HepG2 (cell line): ENCODE measurements at regions of chr1 and their contacts with region 1.

Region 1: GRCh38 chr1:147236959-147237826 is 5.3 kb upstream of the CHD1L start:
- DNase-seq: no peak
- ATAC-seq: peak; percentile 17; the same call in 2 of the 3 replicates
- H3K4me3 ChIP-seq: no peak overlapping the region; a peak in 2 of 6 replicates
- H3K27ac ChIP-seq: peak overlapping the region; percentile 93
- H3K4me1 ChIP-seq: peaks cover 87% of the 10 kb centered on the region
- H3K27me3 ChIP-seq: no peaks in the 10 kb centered on the region
- CTCF ChIP-seq: peak; percentile 33; the same call in 1 of the 2 replicates
- EP300 ChIP-seq: no peak
- POLR2A ChIP-seq: no peak
- RAD21 ChIP-seq: no peak

Region 2: DNA sequence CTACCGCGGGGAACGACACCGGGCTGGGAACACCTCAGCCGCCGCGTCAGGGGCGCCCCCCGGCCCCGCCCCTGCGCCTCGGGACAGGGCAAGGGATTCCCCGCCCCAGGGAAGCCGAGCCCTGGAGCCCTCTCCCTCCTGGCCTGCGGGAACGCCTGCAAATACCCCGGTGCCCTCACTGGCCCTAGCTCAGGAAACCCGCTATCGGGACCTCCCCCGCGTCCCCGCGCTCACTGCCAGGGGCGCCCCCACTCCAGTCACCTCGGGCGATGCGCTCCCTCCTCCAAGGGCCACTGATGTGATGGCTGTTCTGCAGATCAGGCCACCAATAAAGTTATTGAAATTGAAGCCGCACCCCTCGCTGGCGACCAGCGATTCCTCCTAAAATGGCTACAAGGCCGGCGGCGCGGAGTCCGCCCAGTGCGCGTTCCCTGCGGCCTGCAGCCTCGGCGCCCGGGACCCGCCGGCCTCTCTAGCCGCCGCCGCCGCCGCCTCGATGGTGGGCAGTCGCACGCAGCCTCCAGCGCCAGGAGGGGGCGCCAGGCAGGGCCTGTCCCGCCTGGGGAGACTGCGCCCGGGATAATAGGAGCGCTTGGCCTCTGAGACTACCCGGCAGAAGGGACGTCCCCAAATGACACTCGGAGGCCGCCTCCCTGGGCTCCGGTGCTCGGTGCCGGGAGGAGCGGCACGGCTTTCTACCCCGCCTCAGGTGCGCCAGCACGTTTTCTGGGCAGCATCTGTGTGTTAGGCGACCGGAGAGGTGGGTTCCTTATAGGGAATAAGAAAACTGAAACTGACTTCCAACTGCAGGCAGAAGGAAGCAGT is 64.8 kb before region 1 on chr1 and contains the start of gene PRKAB2:
- CTCF ChIA-PET with region 1: interaction called, 141 read pairs
- POLR2A ChIA-PET with region 1: interaction called, 82 read pairs
- in situ Hi-C with region 1: loop called (anchors 5 kb)
- intact Hi-C with region 1: loop called (anchors 1 kb)
- DNase-seq: peak; percentile 91
- ATAC-seq: peak; percentile 93
- H3K4me3 ChIP-seq: peak within 1 kb of the TSS; percentile 85 to 99 (median 99)
- H3K27ac ChIP-seq: peak within 1 kb of the TSS; percentile 89
- H3K4me1 ChIP-seq: peaks cover 40% of the 10 kb centered on the region
- H3K27me3 ChIP-seq: peaks cover 0 to 4% of the 10 kb centered on the region in 2 experiments; a peak in 1 of 5 replicates
- CTCF ChIP-seq: peak; percentile 92
- EP300 ChIP-seq: peak in 1 of 2 experiments; percentile 35; a peak in 1 of 4 replicates
- POLR2A ChIP-seq: peak in 1 of 2 experiments; percentile 59; a peak in 3 of 4 replicates
- RAD21 ChIP-seq: peak; percentile 99
- total RNA-seq, gene PRKAB2: 43.3 and 44.0 TPM in 2 replicates

Region 3: DNA sequence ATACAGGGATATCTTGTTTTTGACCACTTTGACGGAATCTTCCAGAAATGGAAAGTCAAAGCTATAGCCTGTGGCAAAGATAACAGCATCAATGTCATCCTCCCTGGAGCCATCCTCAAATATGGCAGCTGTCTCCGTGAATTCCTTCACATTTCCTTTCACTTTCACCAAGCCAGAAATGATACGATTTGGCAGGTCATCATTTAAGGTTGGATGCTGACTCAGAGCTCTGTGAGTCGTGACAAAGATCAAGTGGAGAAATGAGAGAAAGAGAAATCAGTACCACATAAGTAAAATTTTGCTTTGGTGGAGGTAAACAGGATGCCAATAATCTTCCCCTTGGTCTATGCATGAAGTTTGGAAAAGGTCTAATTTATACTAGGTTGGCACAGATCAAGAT is 35.9 kb before region 1 on chr1:
- CTCF ChIA-PET with region 1: no interaction called
- POLR2A ChIA-PET with region 1: interaction called, 12 read pairs
- in situ Hi-C with region 1: no loop called
- intact Hi-C with region 1: loop called (anchors 5 kb)
- DNase-seq: no peak
- ATAC-seq: peak; percentile 13; the same call in 1 of the 3 replicates
- H3K4me3 ChIP-seq: no peak overlapping the region
- H3K27ac ChIP-seq: no peak overlapping the region
- H3K4me1 ChIP-seq: no peaks in the 10 kb centered on the region
- H3K27me3 ChIP-seq: no peaks in the 10 kb centered on the region
- CTCF ChIP-seq: no peak
- EP300 ChIP-seq: no peak
- POLR2A ChIP-seq: peak in 1 of 2 experiments; percentile 20; a peak in 1 of 4 replicates
- RAD21 ChIP-seq: no peak

Region 4: DNA sequence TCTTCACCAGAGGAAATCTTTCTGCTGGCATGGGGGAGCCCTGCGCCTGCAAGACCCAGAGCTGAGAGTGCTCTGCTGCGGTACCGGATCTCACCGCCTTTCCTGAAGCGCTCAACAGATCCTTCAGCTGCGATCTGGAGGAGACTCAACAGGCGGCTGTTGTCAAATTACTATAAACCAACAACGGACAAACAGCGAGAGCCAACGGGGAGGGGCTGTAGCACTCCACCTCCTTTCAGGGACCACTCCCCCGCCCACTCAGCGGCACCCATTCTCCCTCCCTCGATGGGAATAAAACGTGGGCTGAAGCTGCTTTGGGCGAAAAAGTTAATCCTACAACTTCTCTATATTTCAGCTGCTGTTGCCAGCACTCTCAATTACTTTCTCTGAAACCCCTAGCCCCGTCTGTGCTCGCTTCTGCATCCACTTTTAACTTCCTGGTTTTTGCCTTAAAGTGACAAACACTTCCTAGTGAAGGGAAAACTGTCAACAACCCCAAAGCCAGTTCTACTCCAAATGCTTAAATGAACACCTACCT is 11.9 kb before region 1 on chr1 and contains the start of gene FMO5:
- CTCF ChIA-PET with region 1: interaction called, 16 read pairs
- POLR2A ChIA-PET with region 1: interaction called, 100 read pairs
- in situ Hi-C with region 1: no loop called
- intact Hi-C with region 1: loop called (anchors 2 kb)
- DNase-seq: no peak
- ATAC-seq: peak; percentile 93
- H3K4me3 ChIP-seq: peak within 1 kb of the TSS; percentile 62 to 80 (median 69)
- H3K27ac ChIP-seq: peak within 1 kb of the TSS; percentile 74
- H3K4me1 ChIP-seq: peaks cover 59% of the 10 kb centered on the region
- H3K27me3 ChIP-seq: no peaks in the 10 kb centered on the region; a peak in 1 of 5 replicates
- CTCF ChIP-seq: peak; percentile 9; the same call in 1 of the 2 replicates
- EP300 ChIP-seq: no peak
- POLR2A ChIP-seq: peak in 1 of 2 experiments; percentile 90; a peak in 2 of 4 replicates
- RAD21 ChIP-seq: no peak
- total RNA-seq, gene FMO5: 48.2 and 59.5 TPM in 2 replicates

Region 5: GRCh38 chr1:147316968-147317367 is 79.8 kb after region 1 on chr1:
- CTCF ChIA-PET with region 1: no interaction called
- POLR2A ChIA-PET with region 1: no interaction called
- in situ Hi-C with region 1: no loop called
- intact Hi-C with region 1: no loop called
- DNase-seq: no peak
- ATAC-seq: no peak
- H3K4me3 ChIP-seq: no peak overlapping the region
- H3K27ac ChIP-seq: no peak overlapping the region
- H3K4me1 ChIP-seq: no peaks in the 10 kb centered on the region
- H3K27me3 ChIP-seq: no peaks in the 10 kb centered on the region; a peak in 2 of 5 replicates
- CTCF ChIP-seq: no peak
- EP300 ChIP-seq: no peak
- POLR2A ChIP-seq: no peak
- RAD21 ChIP-seq: no peak